ENCODE measurements at regions of chr1 and their contacts with region 1.

Region 1: DNA sequence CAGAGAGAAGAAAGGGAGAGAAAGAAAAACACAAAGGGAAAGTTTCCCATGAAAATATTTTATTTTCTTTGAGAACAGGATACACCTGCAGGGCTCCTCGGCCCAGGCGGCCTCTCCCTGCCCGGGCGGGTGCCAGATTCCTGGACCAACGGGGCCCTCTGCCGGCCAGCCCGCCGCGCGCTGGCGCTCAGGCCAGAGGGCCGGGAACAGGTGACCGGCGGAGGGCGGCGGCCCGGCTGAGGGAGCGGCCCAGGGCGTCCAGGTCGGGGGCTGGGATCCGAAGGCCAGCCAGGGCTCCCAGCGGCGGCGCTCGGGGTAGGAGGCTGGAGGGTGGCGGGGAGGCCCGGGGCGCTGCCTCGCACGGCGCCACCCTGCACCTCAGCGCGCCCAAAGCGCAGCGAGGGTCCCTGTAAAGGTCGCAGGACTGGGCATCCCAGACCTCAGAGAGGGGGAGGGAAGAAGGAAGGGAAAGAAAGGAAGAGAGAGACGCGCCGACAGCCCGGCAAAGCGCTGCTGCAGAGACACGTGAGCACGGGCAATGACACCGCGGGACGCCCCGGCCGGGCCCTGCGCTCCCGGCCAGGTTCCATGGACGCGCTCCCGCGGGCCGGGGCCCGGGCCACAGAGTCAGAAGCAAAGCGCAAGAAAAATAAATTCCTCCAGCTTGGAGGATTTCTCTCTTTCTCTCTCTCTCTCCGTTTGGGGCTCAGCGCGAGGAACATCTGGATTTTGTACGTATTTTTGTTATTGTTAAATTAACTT is 927 bp downstream of the WNT9A start:
- DNase-seq: peak; percentile 36 to 63 (median 50)
- H3K4me3 ChIP-seq: peak overlapping the region; percentile 29 to 43
- H3K4me3 Mint-ChIP-seq: peak overlapping the region; percentile 75 to 84 (median 77)
- H3K27ac ChIP-seq: no peak overlapping the region
- H3K27ac Mint-ChIP-seq: no peak overlapping the region
- H3K4me1 ChIP-seq: peaks cover 18% of the 10 kb centered on the region
- H3K4me1 Mint-ChIP-seq: peaks cover 2 to 14% (median 8%) of the 10 kb centered on the region in 4 donors
- H3K27me3 ChIP-seq: peaks cover 6% of the 10 kb centered on the region
- H3K27me3 Mint-ChIP-seq: peaks cover 3 to 10% of the 10 kb centered on the region in 2 donors

Region 2: GRCh38 chr1:227482023-227482299 is 464.8 kb before region 1 on chr1:
- CTCF ChIA-PET with region 1: interaction called, 18 read pairs
- POLR2A ChIA-PET with region 1: no interaction called
- intact Hi-C with region 1: no loop called
- DNase-seq: no peak
- H3K4me3 ChIP-seq: no peak overlapping the region
- H3K4me3 Mint-ChIP-seq: no peak overlapping the region
- H3K27ac ChIP-seq: no peak overlapping the region
- H3K27ac Mint-ChIP-seq: no peak overlapping the region
- H3K4me1 ChIP-seq: no peaks in the 10 kb centered on the region
- H3K4me1 Mint-ChIP-seq: no peaks in the 10 kb centered on the region
- H3K27me3 ChIP-seq: no peaks in the 10 kb centered on the region
- H3K27me3 Mint-ChIP-seq: peaks cover 23 to 25% of the 10 kb centered on the region in 2 donors

Region 3: DNA sequence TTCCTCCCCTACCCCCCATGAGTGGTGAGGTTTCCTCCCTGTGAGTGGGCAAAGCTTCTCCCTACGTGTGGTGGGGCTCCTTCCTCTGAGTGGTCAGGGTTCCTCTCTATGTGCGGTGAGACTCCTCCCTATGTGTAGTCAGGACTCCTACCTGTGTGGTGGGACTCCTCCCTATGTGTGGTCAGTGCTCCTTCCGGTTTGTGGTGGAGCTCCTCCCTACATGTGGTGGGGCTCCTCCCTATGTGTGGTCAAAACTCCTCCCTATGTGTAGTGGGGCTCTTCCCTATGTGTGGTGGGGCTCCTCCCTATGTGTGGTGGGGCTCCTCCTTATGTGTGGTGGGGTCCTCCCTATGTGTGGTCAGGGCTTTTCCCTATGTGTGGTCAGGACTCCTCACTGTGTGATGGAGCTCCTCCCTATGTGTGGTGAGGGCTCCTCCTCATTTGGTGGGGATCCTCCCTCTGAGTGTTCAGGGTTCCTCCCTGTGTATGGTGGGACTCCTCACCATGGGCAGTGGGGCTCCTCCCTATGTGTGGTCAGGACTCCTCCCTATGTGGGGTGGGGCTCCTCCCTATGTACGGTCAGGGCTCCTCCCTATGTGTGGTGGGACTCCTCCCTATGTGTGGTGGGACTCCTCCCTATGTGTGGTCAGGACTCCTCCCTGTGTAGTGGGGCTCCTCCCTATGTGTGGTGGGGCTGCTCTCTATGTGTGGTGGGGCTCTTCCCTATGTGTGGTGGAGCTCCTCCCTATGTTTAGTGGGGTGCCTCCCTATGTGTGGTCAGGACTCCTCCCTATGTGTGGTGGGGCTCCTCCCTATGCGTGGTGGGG is 102.3 kb before region 1 on chr1:
- CTCF ChIA-PET with region 1: interaction called, 25 read pairs
- POLR2A ChIA-PET with region 1: interaction called, 3 read pairs
- intact Hi-C with region 1: no loop called
- DNase-seq: peak in 1 of 5 donors; percentile 4
- H3K4me3 ChIP-seq: no peak overlapping the region
- H3K4me3 Mint-ChIP-seq: no peak overlapping the region
- H3K27ac ChIP-seq: no peak overlapping the region
- H3K27ac Mint-ChIP-seq: peak overlapping the region in 5 of 7 donors; percentile 18 to 55 (median 47)
- H3K4me1 ChIP-seq: no peaks in the 10 kb centered on the region
- H3K4me1 Mint-ChIP-seq: peaks cover 0 to 4% (median 3%) of the 10 kb centered on the region in 4 donors
- H3K27me3 ChIP-seq: no peaks in the 10 kb centered on the region
- H3K27me3 Mint-ChIP-seq: peaks cover 1 to 3% of the 10 kb centered on the region in 2 donors